ENCODE measurements at regions of chr1 and their contacts with region 1.

Region 1: DNA sequence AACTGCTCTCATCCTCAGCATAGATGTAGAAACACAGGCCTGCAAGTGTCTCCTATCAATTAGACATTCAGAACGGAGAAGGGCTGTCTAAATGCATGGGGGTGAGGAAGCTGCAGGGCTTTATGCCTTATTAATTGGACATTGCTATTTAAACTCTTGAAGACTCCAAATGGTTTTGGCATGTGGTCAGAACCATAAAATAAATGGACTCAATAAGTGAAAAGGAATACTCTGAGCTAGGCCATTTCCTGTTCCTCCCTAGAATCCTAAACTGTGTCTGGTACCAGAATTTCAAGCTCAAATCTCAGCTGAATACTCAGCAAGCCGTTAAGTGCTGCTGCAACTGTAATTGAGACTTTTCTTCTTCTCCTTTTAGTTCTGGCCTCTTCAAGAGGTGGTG is 80.4 kb upstream of the C1orf87 start:
- DNase-seq: no peak
- ATAC-seq: no peak
- H3K4me3 ChIP-seq: no peak overlapping the region
- H3K27ac ChIP-seq: no peak overlapping the region
- H3K4me1 ChIP-seq: no peaks in the 10 kb centered on the region
- H3K27me3 ChIP-seq: no peaks in the 10 kb centered on the region; a peak in 1 of 4 replicates
- CTCF ChIP-seq: no peak
- EP300 ChIP-seq: no peak
- POLR2A ChIP-seq: no peak
- RAD21 ChIP-seq: no peak

Region 2: GRCh38 chr1:59971464-59971911 is 182.5 kb before region 1 on chr1:
- CTCF ChIA-PET with region 1: no interaction called
- POLR2A ChIA-PET with region 1: no interaction called
- RAD21 ChIA-PET with region 1: no interaction called
- SMC1A ChIA-PET with region 1: no interaction called
- in situ Hi-C with region 1: no loop called
- intact Hi-C with region 1: loop called (anchors 10 kb)
- DNase-seq: no peak
- ATAC-seq: peak; percentile 86
- H3K4me3 ChIP-seq: no peak overlapping the region
- H3K27ac ChIP-seq: no peak overlapping the region
- H3K4me1 ChIP-seq: no peaks in the 10 kb centered on the region
- H3K27me3 ChIP-seq: no peaks in the 10 kb centered on the region
- CTCF ChIP-seq: peak; percentile 87 to 90 (median 90)
- EP300 ChIP-seq: no peak
- POLR2A ChIP-seq: no peak
- RAD21 ChIP-seq: peak; percentile 68